Left cardiac atrium (tissue), 4 donors: ENCODE measurements at regions of chr10 and their contacts with region 1.

Region 1: GRCh38 chr10:98309366-98310355 is 41.7 kb upstream of the LOXL4 start:
- DNase-seq: peak; percentile 69
- ATAC-seq: peak; percentile 97

Region 2: GRCh38 chr10:97914837-97915211 is 394.8 kb before region 1 on chr10:
- intact Hi-C with region 1: loop called in 1 of 2 experiments (anchors 10 kb)
- DNase-seq: peak; percentile 82
- ATAC-seq: peak; percentile 83 to 88

Region 3: DNA sequence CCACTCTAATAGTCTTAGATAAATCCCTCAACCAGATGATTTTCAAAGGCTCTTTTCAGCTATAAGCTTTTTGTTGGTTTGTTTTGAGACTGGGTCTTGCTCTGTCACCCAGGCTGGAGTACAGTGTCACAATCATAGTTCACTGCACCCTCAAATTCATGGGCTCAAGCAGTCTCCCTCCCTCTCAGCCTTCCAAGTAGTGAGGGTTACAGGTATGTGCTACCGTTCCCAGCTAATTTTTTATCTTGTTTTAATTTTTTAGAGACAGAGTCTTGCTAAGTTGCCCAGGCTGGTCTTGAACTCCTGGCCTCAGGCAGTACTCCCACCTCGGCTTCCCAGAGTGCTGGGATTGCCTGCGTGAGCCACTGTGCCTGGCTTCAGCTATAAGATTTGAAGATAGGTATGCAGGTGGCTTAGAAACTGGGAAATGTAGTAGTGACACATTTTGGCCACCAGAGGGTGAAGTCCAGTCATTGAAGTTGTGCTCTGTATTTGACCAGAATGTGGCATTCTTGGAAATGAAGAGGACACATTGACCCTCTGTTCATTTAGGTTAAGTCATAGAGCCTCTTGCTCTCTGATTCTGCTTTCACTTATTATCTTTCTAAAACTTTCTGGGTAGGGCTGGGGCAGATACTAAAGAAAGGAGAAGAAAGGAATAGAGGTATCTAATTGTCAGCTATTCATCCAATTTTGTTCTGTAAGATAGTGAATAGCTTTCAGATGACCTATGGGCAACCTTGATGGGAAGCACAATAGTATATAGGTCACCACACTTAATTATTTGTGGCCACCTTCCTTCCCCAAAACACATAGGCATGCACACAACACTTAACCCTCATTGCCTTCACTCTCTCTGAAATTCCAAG is 139.2 kb before region 1 on chr10:
- intact Hi-C with region 1: loop called (anchors 2 to 5 kb)
- DNase-seq: no peak
- ATAC-seq: peak in 1 of 2 donors; percentile 67

Region 4: DNA sequence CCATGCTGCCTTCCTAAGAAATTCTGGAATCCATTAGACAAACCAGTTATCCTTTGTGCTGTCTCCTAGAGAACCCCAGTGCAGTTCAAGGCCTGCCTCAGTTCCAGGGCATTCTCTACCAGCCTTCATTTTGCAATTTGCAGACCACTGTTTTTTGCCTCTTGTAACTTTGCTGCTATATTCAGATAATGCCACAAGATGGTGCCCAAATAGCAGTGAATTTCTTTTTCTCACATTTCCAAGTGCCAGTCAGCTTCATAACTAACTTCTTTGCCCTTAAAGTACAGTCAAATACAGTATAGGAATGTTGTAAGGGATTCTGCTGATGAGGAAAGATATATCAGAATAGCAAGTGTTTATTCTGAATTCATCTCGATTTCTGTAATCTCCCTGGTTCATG is 66.8 kb before region 1 on chr10:
- intact Hi-C with region 1: loop called in 1 of 2 experiments (anchors 10 kb)
- DNase-seq: no peak
- ATAC-seq: no peak

Region 5: GRCh38 chr10:98262571-98262970 is 47.1 kb before region 1 on chr10:
- intact Hi-C with region 1: loop called (anchors 1 to 10 kb)
- DNase-seq: no peak
- ATAC-seq: peak; percentile 64 to 69

Region 6: DNA sequence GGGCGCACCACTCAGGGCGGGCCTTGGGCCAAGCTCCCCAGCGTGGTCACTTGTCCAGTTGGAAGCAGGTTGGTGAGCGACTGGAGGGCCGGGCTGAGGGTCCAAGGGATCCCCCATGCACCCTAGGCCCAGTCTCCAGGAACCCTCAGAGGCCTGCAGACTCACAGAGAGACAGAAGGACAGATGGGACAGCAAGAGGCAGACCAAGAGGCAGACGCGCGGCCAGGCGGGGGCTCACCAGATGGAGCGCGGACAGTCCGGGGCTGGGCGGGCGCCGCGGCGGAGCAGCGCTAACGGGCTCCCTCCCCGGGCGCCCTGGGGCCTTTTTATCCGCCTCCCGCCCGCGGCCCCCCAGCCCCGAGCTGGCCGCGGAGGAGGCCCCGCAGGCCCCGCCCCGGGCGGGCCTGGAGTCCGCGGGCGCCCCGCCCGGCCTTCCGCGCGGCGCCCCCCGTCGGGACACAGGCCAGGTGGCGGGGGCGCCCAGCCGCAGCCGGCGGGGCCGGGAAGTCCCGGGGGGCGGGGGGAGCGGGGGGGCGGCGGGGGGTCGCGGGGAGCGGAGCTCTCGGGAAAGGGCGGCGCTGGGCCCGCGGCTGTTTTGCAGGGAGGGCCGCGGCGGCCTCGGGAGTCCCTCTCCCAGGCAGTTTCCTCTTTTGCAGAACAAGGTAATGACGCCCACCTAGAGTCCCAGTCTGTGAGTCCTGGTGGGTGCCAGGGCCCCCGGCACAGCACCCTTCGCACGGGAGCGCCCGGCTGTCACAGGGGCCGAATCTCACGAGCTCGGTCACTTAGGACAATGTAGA is 41.6 kb before region 1 on chr10 and contains the start of gene LOXL4:
- intact Hi-C with region 1: loop called in 1 of 2 experiments (anchors 2 kb)
- DNase-seq: no peak
- ATAC-seq: peak; percentile 31 to 61
- total RNA-seq, gene LOXL4: 0.77 to 0.94 TPM